ENCODE measurements at regions of chr3 and their contacts with region 1.

Region 1: DNA sequence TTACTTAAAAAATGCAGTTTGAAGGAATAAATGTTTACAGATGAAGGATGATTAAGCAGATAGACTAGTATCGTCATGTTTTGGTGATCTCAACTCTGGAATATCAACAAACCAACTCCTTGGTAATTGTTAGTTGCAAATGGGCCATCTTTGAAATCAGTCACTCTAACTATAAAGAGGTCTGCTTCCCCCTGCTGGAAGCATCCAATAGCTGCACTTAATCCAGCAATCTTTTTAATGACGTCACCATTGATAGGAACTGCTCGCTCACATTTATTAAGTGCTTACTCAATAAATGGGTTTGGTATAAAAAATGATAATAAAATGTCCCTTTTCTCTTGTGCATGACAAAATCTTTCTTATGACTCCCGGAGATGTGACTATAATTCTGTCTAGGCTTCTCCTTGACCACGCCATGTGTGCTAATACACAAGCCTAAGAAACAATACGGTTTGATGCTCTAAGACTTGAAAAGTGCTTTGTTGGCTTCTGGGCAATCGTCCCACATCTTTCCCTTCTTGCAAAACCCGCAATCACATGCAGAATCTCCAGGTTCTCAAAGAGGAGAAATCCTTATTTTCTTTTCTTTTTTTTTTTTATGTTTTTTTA is 227.6 kb upstream of the POU1F1 start:
- DNase-seq: peak; percentile 60
- ATAC-seq: peak; percentile 52; the same call in 1 of the 3 replicates
- H3K4me3 ChIP-seq: no peak overlapping the region
- H3K27ac ChIP-seq: no peak overlapping the region
- H3K4me1 ChIP-seq: no peaks in the 10 kb centered on the region
- H3K27me3 ChIP-seq: no peaks in the 10 kb centered on the region
- CTCF ChIP-seq: peak; percentile 62
- EP300 ChIP-seq: no peak
- POLR2A ChIP-seq: no peak
- RAD21 ChIP-seq: peak; percentile 25; the same call in 1 of the 2 replicates

Region 2: DNA sequence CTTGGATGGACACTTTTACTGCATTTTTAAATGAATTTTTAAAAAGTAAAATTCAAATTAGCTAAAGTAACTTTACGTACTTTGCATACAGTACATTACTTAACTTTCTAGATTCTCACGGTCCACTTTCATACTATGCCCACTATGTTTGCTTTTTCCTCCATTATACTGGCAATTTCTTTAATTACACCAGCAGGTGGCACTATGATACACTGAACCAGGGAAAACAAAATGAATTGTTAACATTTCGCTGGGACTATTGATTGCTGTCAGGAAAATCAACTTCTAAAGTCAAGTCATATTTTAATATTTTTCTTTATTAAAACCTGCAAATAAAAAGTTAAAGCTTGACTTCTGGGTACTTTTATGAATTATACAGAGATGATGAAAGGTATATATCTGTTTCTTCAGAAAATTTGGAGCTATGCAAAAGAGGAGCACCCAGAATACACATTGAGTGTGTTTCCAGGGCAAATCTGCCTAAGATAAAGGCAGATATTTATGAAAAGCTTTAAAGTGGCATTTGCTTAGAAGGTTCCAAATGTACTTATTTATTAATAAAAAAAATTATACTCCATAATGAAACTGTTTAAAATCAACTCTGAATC is 205.8 kb before region 1 on chr3:
- CTCF ChIA-PET with region 1: interaction called, 24 read pairs
- POLR2A ChIA-PET with region 1: no interaction called
- in situ Hi-C with region 1: loop called (anchors 5 kb)
- intact Hi-C with region 1: loop called (anchors 1 kb)
- DNase-seq: peak; percentile 54
- ATAC-seq: peak; percentile 74
- H3K4me3 ChIP-seq: no peak overlapping the region
- H3K27ac ChIP-seq: no peak overlapping the region
- H3K4me1 ChIP-seq: no peaks in the 10 kb centered on the region
- H3K27me3 ChIP-seq: no peaks in the 10 kb centered on the region
- CTCF ChIP-seq: peak; percentile 70
- EP300 ChIP-seq: no peak
- POLR2A ChIP-seq: no peak
- RAD21 ChIP-seq: no peak

Region 3: GRCh38 chr3:87350364-87351199 is 153.4 kb before region 1 on chr3:
- CTCF ChIA-PET with region 1: interaction called, 7 read pairs
- POLR2A ChIA-PET with region 1: no interaction called
- in situ Hi-C with region 1: loop called (anchors 10 kb)
- intact Hi-C with region 1: loop called (anchors 1 kb)
- DNase-seq: peak; percentile 41
- ATAC-seq: peak; percentile 93
- H3K4me3 ChIP-seq: no peak overlapping the region
- H3K27ac ChIP-seq: no peak overlapping the region
- H3K4me1 ChIP-seq: no peaks in the 10 kb centered on the region
- H3K27me3 ChIP-seq: no peaks in the 10 kb centered on the region
- CTCF ChIP-seq: peak; percentile 73
- EP300 ChIP-seq: no peak
- POLR2A ChIP-seq: no peak
- RAD21 ChIP-seq: 0 out of 2 replicates have a peak, but pooled peaks have one; percentile 25

Region 4: DNA sequence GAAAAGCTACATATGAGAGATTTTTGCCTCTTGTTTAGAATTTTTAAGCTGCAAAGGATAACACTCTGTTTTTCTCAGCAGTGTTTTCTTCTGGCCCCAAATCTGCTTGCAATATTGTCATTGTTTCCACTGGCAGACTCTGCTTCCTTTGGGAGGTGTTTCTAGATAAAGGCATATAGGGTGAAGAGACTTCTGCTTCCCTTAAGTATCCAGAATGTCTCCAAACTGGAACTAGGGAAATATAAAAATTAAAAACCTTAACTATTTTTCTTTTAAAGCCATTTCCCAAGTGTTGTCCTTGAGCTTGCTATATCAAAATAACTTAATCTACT is 329.0 kb after region 1 on chr3:
- CTCF ChIA-PET with region 1: no interaction called
- POLR2A ChIA-PET with region 1: no interaction called
- in situ Hi-C with region 1: no loop called
- intact Hi-C with region 1: no loop called
- DNase-seq: no peak
- ATAC-seq: no peak
- H3K4me3 ChIP-seq: no peak overlapping the region
- H3K27ac ChIP-seq: no peak overlapping the region
- H3K4me1 ChIP-seq: no peaks in the 10 kb centered on the region
- H3K27me3 ChIP-seq: no peaks in the 10 kb centered on the region
- CTCF ChIP-seq: no peak
- EP300 ChIP-seq: no peak
- POLR2A ChIP-seq: no peak
- RAD21 ChIP-seq: no peak